ENCODE measurements at regions of chrX and their contacts with region 1.

Region 1: DNA sequence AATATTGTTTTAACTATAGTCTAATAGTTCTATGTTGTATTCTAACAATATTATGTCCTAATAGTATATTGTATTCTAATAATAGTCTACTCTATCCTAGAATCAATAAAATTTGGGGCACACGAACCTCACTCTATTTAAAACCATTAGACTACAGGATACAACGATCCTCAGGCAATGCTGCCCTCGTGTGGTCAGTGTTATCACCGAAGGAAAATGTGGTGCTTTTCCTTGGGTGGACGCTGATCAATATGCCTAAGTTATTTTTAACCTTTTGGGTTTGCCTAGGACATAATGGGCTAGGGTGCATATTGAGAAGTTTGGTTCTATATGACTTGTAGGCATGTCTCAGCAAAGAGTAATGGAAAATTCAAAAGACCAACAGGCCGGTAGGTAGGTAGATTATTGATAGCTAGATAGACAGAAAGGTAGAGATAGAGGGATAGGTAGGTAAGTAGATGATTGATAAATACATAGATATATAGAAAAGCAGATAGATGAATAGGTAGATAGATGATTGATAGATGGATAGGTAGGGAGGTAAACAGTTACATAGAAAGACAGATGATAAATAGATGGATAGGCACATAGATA is 75.1 kb downstream of the PRKX start:
- DNase-seq: peak; percentile 7
- ATAC-seq: no peak
- H3K4me3 ChIP-seq: no peak overlapping the region
- H3K27ac ChIP-seq: no peak overlapping the region
- H3K4me1 ChIP-seq: no peaks in the 10 kb centered on the region
- H3K27me3 ChIP-seq: no peaks in the 10 kb centered on the region
- CTCF ChIP-seq: peak; percentile 32 to 59 (median 41); a peak in 4 of 6 replicates
- POLR2A ChIP-seq: no peak
- RAD21 ChIP-seq: peak; percentile 56

Region 2: DNA sequence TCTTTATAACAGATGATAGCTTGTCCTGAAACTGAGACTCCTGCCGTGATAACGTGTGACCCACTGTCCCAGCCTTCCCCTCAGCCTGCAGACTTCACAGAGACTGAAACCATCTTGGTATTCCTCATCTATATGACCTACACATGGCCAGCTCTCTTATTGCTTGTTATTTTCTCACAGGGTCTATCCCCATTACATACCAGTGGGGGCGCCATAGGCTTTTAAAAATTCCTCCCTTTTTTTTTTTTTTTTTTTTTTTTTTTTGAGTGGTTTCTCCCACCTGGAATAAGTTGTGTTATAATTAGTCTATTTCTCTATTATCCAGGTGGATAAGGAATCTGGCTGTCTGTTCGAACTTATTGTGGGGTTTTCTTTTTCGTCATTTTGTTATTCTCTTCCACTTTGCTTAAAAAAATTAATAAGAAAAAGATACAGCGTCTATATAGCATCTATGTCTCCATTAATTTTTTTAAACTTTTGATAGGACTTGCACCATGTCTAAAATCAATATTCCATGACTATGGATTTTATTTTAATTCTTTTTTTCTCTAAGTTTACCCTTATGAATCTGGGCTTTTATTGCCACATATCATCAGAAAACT is 762.5 kb before region 1 on chrX:
- CTCF ChIA-PET with region 1: no interaction called
- POLR2A ChIA-PET with region 1: no interaction called
- RAD21 ChIA-PET with region 1: no interaction called
- intact Hi-C with region 1: loop called (anchors 10 kb)
- DNase-seq: no peak
- ATAC-seq: peak; percentile 75
- H3K4me3 ChIP-seq: no peak overlapping the region
- H3K27ac ChIP-seq: no peak overlapping the region
- H3K4me1 ChIP-seq: peaks cover 0 to 3% of the 10 kb centered on the region in 2 experiments; a peak in 1 of 4 replicates
- H3K27me3 ChIP-seq: no peaks in the 10 kb centered on the region
- CTCF ChIP-seq: peak; percentile 24 to 58 (median 47); a peak in 5 of 6 replicates
- POLR2A ChIP-seq: no peak
- RAD21 ChIP-seq: peak; percentile 51

Region 3: GRCh38 chrX:3029129-3029528 is 609.2 kb before region 1 on chrX:
- CTCF ChIA-PET with region 1: no interaction called
- POLR2A ChIA-PET with region 1: no interaction called
- RAD21 ChIA-PET with region 1: no interaction called
- intact Hi-C with region 1: loop called (anchors 2 kb)
- DNase-seq: no peak
- ATAC-seq: no peak
- H3K4me3 ChIP-seq: no peak overlapping the region
- H3K27ac ChIP-seq: no peak overlapping the region
- H3K4me1 ChIP-seq: no peaks in the 10 kb centered on the region; a peak in 1 of 4 replicates
- H3K27me3 ChIP-seq: no peaks in the 10 kb centered on the region
- CTCF ChIP-seq: no peak
- POLR2A ChIP-seq: no peak
- RAD21 ChIP-seq: no peak

Region 4: GRCh38 chrX:3119376-3119775 is 519.0 kb before region 1 on chrX:
- CTCF ChIA-PET with region 1: interaction called, 5 read pairs
- POLR2A ChIA-PET with region 1: no interaction called
- RAD21 ChIA-PET with region 1: no interaction called
- intact Hi-C with region 1: loop called (anchors 1 kb)
- DNase-seq: no peak
- ATAC-seq: no peak
- H3K4me3 ChIP-seq: no peak overlapping the region
- H3K27ac ChIP-seq: no peak overlapping the region
- H3K4me1 ChIP-seq: no peaks in the 10 kb centered on the region
- H3K27me3 ChIP-seq: no peaks in the 10 kb centered on the region
- CTCF ChIP-seq: no peak
- POLR2A ChIP-seq: no peak
- RAD21 ChIP-seq: no peak

Region 5: DNA sequence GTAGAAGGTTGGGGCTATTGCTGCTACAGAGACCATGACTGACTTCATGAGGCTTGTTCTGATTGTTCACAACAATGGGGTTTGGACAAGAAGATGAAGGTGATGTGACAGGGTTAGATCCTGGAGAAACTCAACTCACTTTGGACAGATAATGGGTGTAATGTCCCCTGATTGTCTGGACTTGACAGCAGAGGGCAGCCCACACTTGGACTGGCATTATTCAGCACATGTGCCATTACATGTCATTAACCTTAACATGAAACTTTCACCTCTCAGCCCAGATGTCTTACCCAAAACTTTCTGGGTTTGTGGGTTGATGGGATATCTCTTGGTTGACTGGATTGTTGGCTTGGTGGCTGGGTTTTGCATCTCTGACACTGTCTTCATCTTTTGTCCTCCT is 393.4 kb before region 1 on chrX:
- CTCF ChIA-PET with region 1: no interaction called
- POLR2A ChIA-PET with region 1: no interaction called
- RAD21 ChIA-PET with region 1: no interaction called
- intact Hi-C with region 1: loop called (anchors 2 kb)
- DNase-seq: no peak
- ATAC-seq: no peak
- H3K4me3 ChIP-seq: no peak overlapping the region
- H3K27ac ChIP-seq: no peak overlapping the region
- H3K4me1 ChIP-seq: no peaks in the 10 kb centered on the region
- H3K27me3 ChIP-seq: no peaks in the 10 kb centered on the region
- CTCF ChIP-seq: peak; percentile 6 to 22 (median 12); a peak in 2 of 6 replicates
- POLR2A ChIP-seq: no peak
- RAD21 ChIP-seq: peak; percentile 65

Region 6: DNA sequence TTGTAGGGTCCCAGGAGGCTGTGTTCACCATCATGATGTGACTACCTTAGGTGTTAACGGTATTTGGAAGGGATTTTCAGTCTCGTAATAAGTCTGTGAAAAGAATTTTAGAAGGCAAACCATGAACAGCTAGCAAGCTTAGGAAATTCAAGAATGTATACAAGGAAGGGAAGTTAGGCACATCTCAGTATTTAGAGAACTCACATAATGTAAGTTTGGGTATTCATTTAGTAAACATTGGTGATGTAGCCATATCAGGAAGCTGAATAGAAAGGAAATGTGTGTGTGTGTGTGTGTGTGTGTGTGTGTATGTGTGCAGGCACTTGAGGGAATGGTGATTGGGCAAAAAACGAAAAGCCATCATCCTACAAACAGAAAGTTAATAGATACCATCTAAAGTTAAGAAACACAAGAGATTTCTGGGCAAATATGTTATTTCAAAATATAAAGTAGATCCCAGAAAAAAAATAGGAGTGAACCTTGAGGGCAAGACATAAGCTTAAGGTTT is 109.7 kb after region 1 on chrX:
- CTCF ChIA-PET with region 1: no interaction called
- POLR2A ChIA-PET with region 1: no interaction called
- RAD21 ChIA-PET with region 1: no interaction called
- intact Hi-C with region 1: no loop called
- DNase-seq: no peak
- ATAC-seq: no peak
- H3K4me3 ChIP-seq: no peak overlapping the region
- H3K27ac ChIP-seq: no peak overlapping the region
- H3K4me1 ChIP-seq: no peaks in the 10 kb centered on the region
- H3K27me3 ChIP-seq: no peaks in the 10 kb centered on the region
- CTCF ChIP-seq: no peak
- POLR2A ChIP-seq: no peak
- RAD21 ChIP-seq: no peak

Region 7: DNA sequence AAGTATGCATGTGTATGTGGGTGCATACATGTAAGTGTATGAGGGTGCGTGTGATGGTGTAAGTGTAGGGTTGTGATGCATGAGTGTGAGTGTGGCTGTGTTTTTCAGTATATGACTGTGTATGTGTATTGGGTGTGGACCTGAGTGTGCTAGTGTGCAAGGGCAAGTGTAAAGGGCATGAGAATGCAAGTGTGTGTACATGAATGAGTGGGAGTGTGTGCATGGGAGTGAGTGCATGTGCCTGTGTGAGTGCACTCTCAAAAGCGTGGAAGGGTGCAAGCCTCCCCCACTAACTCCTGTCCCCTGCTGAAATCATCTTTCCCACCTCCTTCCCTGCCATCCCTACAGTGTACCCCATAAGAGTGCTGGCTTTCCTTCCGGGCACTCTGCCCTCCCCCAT is 300.2 kb after region 1 on chrX:
- CTCF ChIA-PET with region 1: no interaction called
- POLR2A ChIA-PET with region 1: no interaction called
- RAD21 ChIA-PET with region 1: no interaction called
- intact Hi-C with region 1: no loop called
- DNase-seq: no peak
- ATAC-seq: no peak
- H3K4me3 ChIP-seq: no peak overlapping the region
- H3K27ac ChIP-seq: no peak overlapping the region
- H3K4me1 ChIP-seq: no peaks in the 10 kb centered on the region
- H3K27me3 ChIP-seq: no peaks in the 10 kb centered on the region
- CTCF ChIP-seq: no peak
- POLR2A ChIP-seq: no peak
- RAD21 ChIP-seq: no peak

Measured in HCT116 (cell line).